MCF 10A (cell line): ENCODE measurements at regions of chr18 and their contacts with region 1.

Region 1: DNA sequence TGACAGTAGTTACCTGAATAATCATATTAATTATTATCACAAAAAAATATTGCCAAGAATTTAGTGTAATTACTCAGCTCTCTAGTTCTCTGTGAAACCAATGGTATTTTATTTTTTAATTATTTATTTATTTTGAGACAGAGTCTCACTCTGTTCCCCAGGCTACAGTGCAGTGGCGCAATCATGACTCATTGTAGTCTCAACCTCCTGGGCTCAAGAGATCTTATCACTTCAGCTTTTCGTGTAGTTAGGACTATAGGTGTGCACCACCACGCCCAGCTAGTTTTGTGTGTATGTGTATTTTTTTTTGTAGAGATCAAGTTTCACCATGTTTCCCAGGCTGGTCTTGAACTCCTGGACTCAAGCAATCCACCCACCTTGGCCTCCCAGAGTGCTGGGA is 440.4 kb upstream of the CDH20 start:
- DNase-seq: peak; percentile 97
- H3K4me3 Mint-ChIP-seq: peak overlapping the region; percentile 33
- H3K27ac Mint-ChIP-seq: peak overlapping the region; percentile 94
- H3K4me1 Mint-ChIP-seq: peaks cover 34% of the 10 kb centered on the region
- H3K27me3 Mint-ChIP-seq: no peaks in the 10 kb centered on the region
- CTCF ChIP-seq: no peak

Region 2: DNA sequence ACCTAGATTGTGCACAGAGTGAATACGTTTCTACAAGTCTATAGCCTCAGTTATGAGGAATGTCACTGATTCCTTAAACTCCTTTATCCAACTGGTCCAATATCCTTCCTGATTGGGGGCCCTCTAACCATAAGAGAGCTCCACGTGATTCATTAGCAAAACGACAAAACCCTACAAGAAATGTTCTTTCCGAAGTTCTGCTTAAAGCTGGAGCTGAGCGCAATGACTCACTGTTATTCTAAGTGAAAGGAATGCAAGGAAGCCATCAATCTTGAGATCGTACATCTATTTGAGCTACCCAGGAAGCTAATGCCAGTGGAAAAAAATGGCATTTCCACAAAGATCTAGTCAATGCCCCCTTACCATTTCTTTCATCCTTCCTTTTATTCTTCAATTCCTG is 85.5 kb after region 1 on chr18:
- CTCF ChIA-PET with region 1: interaction called, 3 read pairs
- POLR2A ChIA-PET with region 1: interaction called, 26 read pairs
- intact Hi-C with region 1: loop called (anchors 5 kb)
- DNase-seq: peak; percentile 79
- H3K4me3 Mint-ChIP-seq: peak overlapping the region; percentile 43
- H3K27ac Mint-ChIP-seq: peak overlapping the region; percentile 91
- H3K4me1 Mint-ChIP-seq: peaks cover 39% of the 10 kb centered on the region
- H3K27me3 Mint-ChIP-seq: no peaks in the 10 kb centered on the region
- CTCF ChIP-seq: no peak